Activated CD4-positive, alpha-beta memory T cell treated with anti-CD3 and anti-CD28 coated beads for 36 hours (primary cell): ENCODE measurements at regions of chr14 and their contacts with region 1.

Region 1: GRCh38 chr14:103808403-103809001 is 38.9 kb downstream of the PPP1R13B start:
- DNase-seq: peak; percentile 72
- H3K4me3 Mint-ChIP-seq: no peak overlapping the region
- H3K27ac Mint-ChIP-seq: no peak overlapping the region
- H3K4me1 Mint-ChIP-seq: peaks cover 14% of the 10 kb centered on the region
- H3K27me3 Mint-ChIP-seq: no peaks in the 10 kb centered on the region

Region 2: GRCh38 chr14:103699901-103700752 is 108.4 kb before region 1 on chr14:
- CTCF ChIA-PET with region 1: no interaction called
- POLR2A ChIA-PET with region 1: no interaction called
- intact Hi-C with region 1: no loop called
- DNase-seq: no peak
- H3K4me3 Mint-ChIP-seq: no peak overlapping the region
- H3K27ac Mint-ChIP-seq: peak overlapping the region; percentile 9
- H3K4me1 Mint-ChIP-seq: peaks cover 6% of the 10 kb centered on the region
- H3K27me3 Mint-ChIP-seq: no peaks in the 10 kb centered on the region

Region 3: GRCh38 chr14:103819503-103820307 is 11.2 kb after region 1 on chr14:
- CTCF ChIA-PET with region 1: interaction called, 16 read pairs
- POLR2A ChIA-PET with region 1: no interaction called
- intact Hi-C with region 1: no loop called
- DNase-seq: no peak
- H3K4me3 Mint-ChIP-seq: no peak overlapping the region
- H3K27ac Mint-ChIP-seq: peak overlapping the region; percentile 56
- H3K4me1 Mint-ChIP-seq: peaks cover 31% of the 10 kb centered on the region
- H3K27me3 Mint-ChIP-seq: no peaks in the 10 kb centered on the region

Region 4: DNA sequence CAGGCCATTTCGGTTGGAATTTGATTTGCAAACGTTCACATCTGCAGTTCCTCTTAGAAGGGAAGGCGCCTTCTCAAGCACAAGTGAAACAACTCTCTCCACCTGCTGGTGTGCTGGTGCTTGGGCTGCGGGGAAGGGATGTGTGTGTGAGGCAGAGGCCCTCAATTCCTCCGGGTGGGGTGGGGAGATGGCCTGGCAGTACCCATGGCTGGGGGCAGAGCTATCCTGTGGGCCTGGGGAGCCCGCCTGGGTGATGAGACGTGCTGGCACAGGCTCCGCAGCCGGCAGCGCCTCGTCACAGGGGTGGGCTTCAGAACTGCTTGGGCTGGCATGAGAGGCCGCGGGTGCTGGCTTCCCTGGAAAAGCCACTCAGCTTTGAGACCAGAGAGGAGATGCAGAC is 90.8 kb after region 1 on chr14:
- CTCF ChIA-PET with region 1: interaction called, 29 read pairs
- POLR2A ChIA-PET with region 1: no interaction called
- intact Hi-C with region 1: no loop called
- DNase-seq: no peak
- H3K4me3 Mint-ChIP-seq: no peak overlapping the region
- H3K27ac Mint-ChIP-seq: no peak overlapping the region
- H3K4me1 Mint-ChIP-seq: peaks cover 3% of the 10 kb centered on the region
- H3K27me3 Mint-ChIP-seq: no peaks in the 10 kb centered on the region

Region 5: GRCh38 chr14:103910262-103910935 is 101.9 kb after region 1 on chr14:
- CTCF ChIA-PET with region 1: interaction called, 100 read pairs
- POLR2A ChIA-PET with region 1: no interaction called
- intact Hi-C with region 1: loop called (anchors 1 kb)
- DNase-seq: peak; percentile 81
- H3K4me3 Mint-ChIP-seq: peak overlapping the region; percentile 27
- H3K27ac Mint-ChIP-seq: peak overlapping the region; percentile 61
- H3K4me1 Mint-ChIP-seq: peaks cover 4% of the 10 kb centered on the region
- H3K27me3 Mint-ChIP-seq: no peaks in the 10 kb centered on the region

Region 6: DNA sequence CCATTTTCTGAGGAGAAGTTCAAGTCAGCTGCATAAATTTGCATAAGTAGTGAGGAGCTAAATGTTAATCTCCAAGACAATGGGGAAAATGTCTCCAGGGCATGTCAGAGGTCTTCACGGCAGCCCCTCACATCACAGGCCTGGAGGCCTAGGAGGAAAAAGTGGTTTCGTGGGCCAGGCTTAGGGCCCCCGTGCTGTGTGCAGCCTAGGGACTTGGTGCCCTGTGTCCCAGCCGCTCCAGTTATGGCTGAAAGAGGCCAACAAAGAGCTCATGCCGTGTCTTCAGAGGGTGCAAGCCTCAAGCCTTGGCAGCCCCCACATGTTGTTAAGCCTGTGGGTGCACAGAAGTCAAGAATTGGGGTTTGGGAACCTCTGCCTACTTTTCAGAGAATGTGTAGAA is 175.7 kb after region 1 on chr14:
- CTCF ChIA-PET with region 1: interaction called, 20 read pairs
- POLR2A ChIA-PET with region 1: no interaction called
- intact Hi-C with region 1: loop called (anchors 5 kb)
- DNase-seq: no peak
- H3K4me3 Mint-ChIP-seq: no peak overlapping the region
- H3K27ac Mint-ChIP-seq: no peak overlapping the region
- H3K4me1 Mint-ChIP-seq: no peaks in the 10 kb centered on the region
- H3K27me3 Mint-ChIP-seq: peaks cover 15% of the 10 kb centered on the region